ENCODE measurements at regions of chr16 and their contacts with region 1.

Region 1: GRCh38 chr16:8963825-8964441 is at the start of gene USP7:
- DNase-seq: peak; percentile 97
- ATAC-seq: peak; percentile 91
- H3K4me3 Mint-ChIP-seq: peak within 1 kb of the TSS; percentile 95
- H3K27ac Mint-ChIP-seq: peak within 1 kb of the TSS; percentile 94
- H3K4me1 Mint-ChIP-seq: peaks cover 34% of the 10 kb centered on the region
- H3K27me3 Mint-ChIP-seq: peaks cover 2% of the 10 kb centered on the region
- total RNA-seq, gene USP7: 165 to 198 TPM

Region 2: GRCh38 chr16:8391257-8391656 is 572.7 kb before region 1 on chr16:
- CTCF ChIA-PET with region 1: no interaction called
- POLR2A ChIA-PET with region 1: no interaction called
- intact Hi-C with region 1: no loop called
- DNase-seq: no peak
- ATAC-seq: no peak
- H3K4me3 Mint-ChIP-seq: no peak overlapping the region
- H3K27ac Mint-ChIP-seq: no peak overlapping the region
- H3K4me1 Mint-ChIP-seq: no peaks in the 10 kb centered on the region
- H3K27me3 Mint-ChIP-seq: peaks cover 2% of the 10 kb centered on the region

Region 3: DNA sequence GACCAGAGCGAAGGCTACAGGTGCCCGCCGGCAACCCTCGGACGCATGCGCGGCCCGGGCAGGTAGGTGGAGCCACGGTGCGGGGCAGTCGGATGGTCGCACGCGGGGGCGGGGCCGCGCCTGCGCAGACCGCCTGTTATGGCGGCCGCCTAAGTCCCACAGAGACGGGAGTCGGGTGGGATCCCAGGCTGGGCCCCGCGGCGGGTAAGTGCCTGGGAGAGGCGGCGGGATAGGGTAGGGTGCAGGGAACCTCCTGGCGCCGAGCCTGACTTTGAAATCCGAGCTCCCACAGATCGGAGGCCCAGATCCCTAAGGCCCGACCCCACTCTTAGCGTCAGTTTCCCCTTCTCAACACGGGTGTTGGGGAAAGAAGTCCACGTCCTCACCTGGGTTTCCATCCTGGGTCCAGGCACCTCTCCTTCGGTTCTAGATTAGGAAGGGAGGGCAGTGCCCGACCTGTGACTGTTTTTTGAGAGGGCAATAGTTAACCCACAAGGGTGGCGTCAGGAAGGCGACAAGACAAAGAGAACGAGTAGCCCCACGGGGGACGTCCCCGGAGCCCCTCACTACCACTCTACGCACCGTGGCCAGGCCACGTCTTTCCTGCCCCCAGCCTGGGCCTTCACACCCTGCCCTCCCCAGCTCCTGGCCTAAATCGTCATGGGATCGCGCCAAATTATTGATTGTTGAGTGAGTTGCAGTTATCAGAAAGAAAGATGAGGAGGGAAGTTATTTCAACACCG is 342.2 kb before region 1 on chr16 and contains the start of gene METTL22:
- CTCF ChIA-PET with region 1: no interaction called
- POLR2A ChIA-PET with region 1: no interaction called
- intact Hi-C with region 1: loop called in 1 of 2 experiments (anchors 2 kb)
- DNase-seq: peak; percentile 96
- ATAC-seq: peak; percentile 98
- H3K4me3 Mint-ChIP-seq: peak within 1 kb of the TSS; percentile 91
- H3K27ac Mint-ChIP-seq: peak within 1 kb of the TSS; percentile 87
- H3K4me1 Mint-ChIP-seq: peaks cover 28% of the 10 kb centered on the region
- H3K27me3 Mint-ChIP-seq: peaks cover 3% of the 10 kb centered on the region
- total RNA-seq, gene METTL22: 32.3 to 45.8 TPM

Region 4: DNA sequence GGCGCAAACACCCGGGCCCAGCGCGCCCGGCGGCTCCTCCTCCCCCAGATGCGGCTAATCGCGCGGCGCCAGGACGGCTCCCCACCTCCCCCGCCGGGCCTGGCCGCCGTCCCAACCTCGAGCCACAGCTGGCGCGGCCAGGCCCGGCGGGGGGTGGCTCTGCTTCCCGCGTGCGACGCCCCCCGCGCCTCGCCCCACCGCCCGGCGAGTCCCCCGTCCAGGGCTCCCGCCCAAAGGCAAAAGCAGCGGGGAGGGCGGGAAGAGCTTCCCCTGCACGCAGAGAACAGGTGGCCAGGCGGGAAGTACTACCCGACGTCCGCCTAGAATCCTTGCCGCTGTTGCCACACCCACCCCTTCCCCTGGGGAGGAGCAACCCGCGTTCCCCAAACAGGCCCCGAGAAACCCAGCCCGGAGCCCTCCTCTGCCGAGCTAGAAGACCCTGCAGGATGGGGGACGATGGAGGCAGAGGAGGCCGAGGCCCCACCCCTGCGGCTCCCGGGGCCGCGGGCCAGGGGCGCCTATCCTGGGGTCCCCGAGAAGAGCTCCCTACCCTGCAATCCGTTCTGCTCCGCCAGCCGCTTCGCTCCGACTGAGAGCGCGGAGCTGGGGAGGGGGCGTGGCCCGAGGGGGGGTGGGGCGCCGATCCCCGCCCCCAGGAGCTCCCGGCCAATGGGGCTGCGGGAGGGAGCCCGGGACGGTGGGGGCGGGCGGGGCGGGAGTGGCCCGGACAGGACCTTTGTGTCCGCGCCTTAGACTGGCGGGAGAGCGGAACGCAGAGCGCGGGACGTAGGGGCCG is 95.3 kb before region 1 on chr16 and contains the start of gene CARHSP1:
- CTCF ChIA-PET with region 1: no interaction called
- POLR2A ChIA-PET with region 1: interaction called, 8 read pairs
- intact Hi-C with region 1: loop called in 1 of 2 experiments (anchors 1 kb)
- DNase-seq: peak; percentile 92
- ATAC-seq: peak; percentile 72
- H3K4me3 Mint-ChIP-seq: peak within 1 kb of the TSS; percentile 87
- H3K27ac Mint-ChIP-seq: peak within 1 kb of the TSS; percentile 92
- H3K4me1 Mint-ChIP-seq: peaks cover 40% of the 10 kb centered on the region
- H3K27me3 Mint-ChIP-seq: no peaks in the 10 kb centered on the region
- total RNA-seq, gene CARHSP1: 49.4 to 64.5 TPM

Region 5: GRCh38 chr16:9047686-9048301 is 83.9 kb after region 1 on chr16:
- CTCF ChIA-PET with region 1: no interaction called
- POLR2A ChIA-PET with region 1: no interaction called
- intact Hi-C with region 1: loop called in 1 of 2 experiments (anchors 5 kb)
- DNase-seq: peak; percentile 84
- ATAC-seq: peak; percentile 75
- H3K4me3 Mint-ChIP-seq: peak overlapping the region; percentile 41
- H3K27ac Mint-ChIP-seq: peak overlapping the region; percentile 74
- H3K4me1 Mint-ChIP-seq: peaks cover 43% of the 10 kb centered on the region
- H3K27me3 Mint-ChIP-seq: peaks cover 5% of the 10 kb centered on the region

Region 6: GRCh38 chr16:9090960-9091866 is 127.3 kb after region 1 on chr16 and contains the start of gene HAPSTR1:
- CTCF ChIA-PET with region 1: interaction called, 3 read pairs
- POLR2A ChIA-PET with region 1: interaction called, 6 read pairs
- intact Hi-C with region 1: loop called (anchors 1 to 2 kb)
- DNase-seq: peak; percentile 100
- ATAC-seq: peak; percentile 94
- H3K4me3 Mint-ChIP-seq: peak within 1 kb of the TSS; percentile 89
- H3K27ac Mint-ChIP-seq: peak within 1 kb of the TSS; percentile 95
- H3K4me1 Mint-ChIP-seq: peaks cover 25% of the 10 kb centered on the region
- H3K27me3 Mint-ChIP-seq: no peaks in the 10 kb centered on the region
- total RNA-seq, gene HAPSTR1: 42.4 to 51.4 TPM

Region 7: DNA sequence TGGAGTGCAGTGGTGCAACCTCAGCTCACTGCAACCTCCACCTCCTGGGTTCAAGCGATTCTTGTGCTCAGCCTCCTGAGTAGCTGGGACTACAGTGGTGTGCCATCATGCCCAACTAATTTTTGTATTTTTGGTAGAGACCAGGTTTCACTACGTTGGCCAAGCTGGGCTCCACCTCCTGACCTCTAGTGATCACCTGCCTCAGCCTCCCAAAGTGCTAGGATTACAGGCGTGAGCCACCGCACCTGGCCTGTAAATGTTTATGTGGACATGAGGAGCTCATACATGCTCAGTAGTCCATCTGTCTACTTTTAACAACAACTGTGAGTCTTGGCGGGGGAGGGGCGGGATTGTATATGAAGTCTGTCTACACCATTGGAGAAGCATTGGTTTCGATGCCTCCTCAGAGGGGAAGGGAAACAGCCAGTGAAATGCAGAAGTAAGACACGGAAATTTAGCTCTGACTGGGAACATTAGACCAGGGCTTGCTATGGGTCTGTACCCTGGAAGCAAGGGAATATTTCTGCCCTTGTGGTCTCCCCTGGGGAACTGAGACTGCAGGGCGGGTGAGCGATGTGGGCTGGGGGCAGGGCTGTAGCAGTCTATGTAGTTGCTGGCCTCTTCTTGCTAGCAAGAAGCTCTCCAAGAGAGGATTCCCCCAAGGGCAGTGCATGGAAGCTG is 1789.0 kb after region 1 on chr16:
- CTCF ChIA-PET with region 1: no interaction called
- POLR2A ChIA-PET with region 1: no interaction called
- intact Hi-C with region 1: loop called in 1 of 2 experiments (anchors 10 kb)
- DNase-seq: peak; percentile 29
- ATAC-seq: no peak
- H3K4me3 Mint-ChIP-seq: no peak overlapping the region
- H3K27ac Mint-ChIP-seq: no peak overlapping the region
- H3K4me1 Mint-ChIP-seq: peaks cover 36% of the 10 kb centered on the region
- H3K27me3 Mint-ChIP-seq: no peaks in the 10 kb centered on the region

Measured in activated CD4-positive, alpha-beta T cell treated with anti-CD3 and anti-CD28 coated beads for 36 hours (primary cell).